A673 (cell line): ENCODE measurements at regions of chrX and their contacts with region 1.

Region 1: GRCh38 chrX:17046478-17047097 is 100.1 kb downstream of the REPS2 start:
- DNase-seq: peak; percentile 77
- H3K4me3 ChIP-seq: no peak overlapping the region
- H3K27ac ChIP-seq: no peak overlapping the region
- H3K4me1 ChIP-seq: no peaks in the 10 kb centered on the region
- H3K27me3 ChIP-seq: no peaks in the 10 kb centered on the region
- CTCF ChIP-seq: peak; percentile 83

Region 2: GRCh38 chrX:16882702-16883486 is 163.7 kb before region 1 on chrX:
- CTCF ChIA-PET with region 1: interaction called, 17 read pairs
- POLR2A ChIA-PET with region 1: no interaction called
- intact Hi-C with region 1: loop called (anchors 1 kb)
- DNase-seq: peak; percentile 83
- H3K4me3 ChIP-seq: peak overlapping the region; percentile 41
- H3K27ac ChIP-seq: peak overlapping the region; percentile 30
- H3K4me1 ChIP-seq: no peaks in the 10 kb centered on the region
- H3K27me3 ChIP-seq: peaks cover 8% of the 10 kb centered on the region
- CTCF ChIP-seq: peak; percentile 87

Region 3: DNA sequence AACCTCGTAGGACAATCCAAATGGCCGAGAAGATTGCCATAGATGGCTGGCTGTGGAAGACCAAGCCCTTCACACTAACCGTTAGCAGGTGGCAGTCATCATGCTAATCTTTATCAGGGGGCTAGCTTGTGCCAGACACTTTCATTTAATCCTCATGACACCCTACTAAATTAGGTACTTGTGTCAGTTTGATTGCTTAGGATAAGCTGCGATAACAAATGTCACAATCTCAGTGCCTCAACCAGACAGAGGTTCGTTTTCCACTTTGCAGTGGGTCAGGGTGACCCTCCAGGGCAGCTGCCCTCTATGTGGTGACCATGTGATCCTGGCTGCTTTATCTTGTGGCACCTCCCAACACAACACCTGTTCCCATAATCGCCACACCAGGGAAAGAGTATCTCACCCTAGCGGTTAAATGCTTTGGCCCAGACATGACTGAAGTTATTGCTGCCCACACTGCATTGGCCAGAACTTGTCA is 39.3 kb before region 1 on chrX:
- CTCF ChIA-PET with region 1: interaction called, 6 read pairs
- POLR2A ChIA-PET with region 1: interaction called, 7 read pairs
- intact Hi-C with region 1: loop called (anchors 1 kb)
- DNase-seq: peak; percentile 58
- H3K4me3 ChIP-seq: no peak overlapping the region
- H3K27ac ChIP-seq: no peak overlapping the region
- H3K4me1 ChIP-seq: no peaks in the 10 kb centered on the region
- H3K27me3 ChIP-seq: peaks cover 61% of the 10 kb centered on the region
- CTCF ChIP-seq: peak; percentile 66